A673 (cell line): ENCODE measurements at regions of chr1 and their contacts with region 1.

Region 1: DNA sequence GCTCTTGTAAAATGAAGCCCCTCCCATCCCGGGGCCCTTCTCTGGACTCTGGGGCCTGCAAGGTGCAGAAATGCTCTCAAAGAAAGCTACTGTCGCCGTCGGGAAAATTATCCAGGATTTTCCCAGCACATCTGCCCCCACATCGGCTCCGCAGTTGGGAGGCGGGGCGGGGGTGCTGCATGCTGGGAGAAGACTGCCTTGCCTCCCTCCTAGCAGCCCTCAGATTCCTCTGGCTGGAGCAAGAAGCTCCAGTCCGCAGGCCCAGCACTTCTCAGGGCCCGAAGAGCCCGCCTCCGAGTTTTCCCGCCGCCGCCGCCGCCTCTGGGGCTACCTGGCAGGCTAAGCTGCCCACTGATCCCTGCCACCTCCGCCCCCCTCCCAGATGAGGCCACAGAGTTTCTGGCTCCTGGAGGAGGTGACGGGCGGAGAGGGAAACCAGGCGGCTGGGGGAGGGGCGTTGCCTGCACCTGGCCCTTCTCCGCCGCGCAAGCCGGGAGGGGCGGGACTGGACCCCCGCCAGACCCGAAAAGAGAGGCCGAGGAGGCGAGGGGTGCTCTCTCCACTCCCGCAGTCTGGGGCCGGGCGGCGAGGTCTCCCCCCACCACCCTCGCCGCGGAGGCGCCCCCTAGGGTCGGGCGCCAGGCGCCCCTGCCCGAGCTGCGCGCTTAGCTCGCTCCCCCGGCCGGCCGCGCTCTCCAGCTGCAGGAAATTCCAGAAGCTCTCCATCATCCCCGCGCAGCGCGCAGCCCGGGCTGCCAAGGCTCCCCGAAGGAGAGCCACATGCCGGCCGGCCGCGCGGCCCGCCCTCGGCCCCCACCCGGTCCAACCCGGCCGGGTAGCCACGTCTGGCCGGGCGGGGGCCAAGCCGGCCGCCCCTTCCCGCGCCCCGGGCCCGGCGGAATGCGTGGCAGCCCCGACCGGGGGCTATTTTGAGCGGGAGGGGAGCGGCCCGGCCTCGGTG is 28.8 kb downstream of the AHDC1 start:
- DNase-seq: peak; percentile 75
- H3K4me3 ChIP-seq: peak overlapping the region; percentile 38
- H3K27ac ChIP-seq: no peak overlapping the region
- H3K4me1 ChIP-seq: peaks cover 59% of the 10 kb centered on the region
- H3K27me3 ChIP-seq: no peaks in the 10 kb centered on the region
- CTCF ChIP-seq: peak; percentile 54

Region 2: GRCh38 chr1:27087371-27088220 is 487.6 kb before region 1 on chr1:
- CTCF ChIA-PET with region 1: interaction called, 11 read pairs
- POLR2A ChIA-PET with region 1: no interaction called
- intact Hi-C with region 1: no loop called
- DNase-seq: no peak
- H3K4me3 ChIP-seq: no peak overlapping the region
- H3K27ac ChIP-seq: no peak overlapping the region
- H3K4me1 ChIP-seq: no peaks in the 10 kb centered on the region
- H3K27me3 ChIP-seq: no peaks in the 10 kb centered on the region
- CTCF ChIP-seq: no peak

Region 3: DNA sequence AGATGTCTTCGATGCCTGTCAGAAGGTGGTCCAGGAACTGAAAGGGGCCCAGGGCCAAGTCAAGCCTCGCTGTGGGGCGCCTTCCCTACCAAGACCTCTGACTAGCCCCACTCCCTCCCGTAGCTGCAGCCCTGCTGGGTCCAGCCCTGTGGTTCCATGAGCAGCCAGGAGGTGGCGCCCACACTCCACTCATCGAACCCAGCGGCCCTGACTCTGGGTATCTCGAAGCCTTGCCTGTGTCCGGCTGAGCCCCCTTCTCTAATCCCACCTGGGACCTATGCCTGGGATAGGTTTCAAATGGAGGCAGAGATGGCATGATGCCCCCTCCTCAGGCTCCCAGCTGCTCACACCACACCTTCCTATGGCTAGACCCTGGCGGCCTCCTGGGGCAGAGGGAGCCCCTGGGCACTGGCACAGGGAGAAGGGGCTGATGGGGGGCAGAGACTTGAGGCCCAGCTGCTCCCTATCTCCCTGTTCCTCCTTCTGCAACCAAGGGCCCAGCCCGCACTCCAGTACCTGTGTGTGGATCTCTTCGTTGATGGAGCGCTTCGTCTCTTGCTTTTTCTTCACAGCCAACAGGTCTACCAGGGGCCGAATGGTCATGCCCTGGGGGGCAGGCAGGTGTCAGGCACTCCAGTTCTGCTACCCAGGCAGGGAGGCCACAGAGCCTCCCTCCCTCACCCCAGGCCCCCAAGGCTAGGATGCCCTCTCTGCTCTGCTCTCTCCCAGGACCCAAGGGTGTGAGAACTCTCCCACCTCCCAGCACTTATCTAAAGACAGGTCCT is 472.3 kb before region 1 on chr1:
- CTCF ChIA-PET with region 1: interaction called, 10 read pairs
- POLR2A ChIA-PET with region 1: no interaction called
- intact Hi-C with region 1: no loop called
- DNase-seq: peak; percentile 74
- H3K4me3 ChIP-seq: no peak overlapping the region
- H3K27ac ChIP-seq: no peak overlapping the region
- H3K4me1 ChIP-seq: peaks cover 16% of the 10 kb centered on the region
- H3K27me3 ChIP-seq: no peaks in the 10 kb centered on the region
- CTCF ChIP-seq: peak; percentile 96

Region 4: GRCh38 chr1:27306892-27307761 is 268.0 kb before region 1 on chr1:
- CTCF ChIA-PET with region 1: interaction called, 10 read pairs
- POLR2A ChIA-PET with region 1: no interaction called
- intact Hi-C with region 1: no loop called
- DNase-seq: no peak
- H3K4me3 ChIP-seq: no peak overlapping the region
- H3K27ac ChIP-seq: no peak overlapping the region
- H3K4me1 ChIP-seq: no peaks in the 10 kb centered on the region
- H3K27me3 ChIP-seq: no peaks in the 10 kb centered on the region
- CTCF ChIP-seq: no peak

Region 5: GRCh38 chr1:27496604-27497155 is 78.5 kb before region 1 on chr1:
- CTCF ChIA-PET with region 1: interaction called, 12 read pairs
- POLR2A ChIA-PET with region 1: no interaction called
- intact Hi-C with region 1: no loop called
- DNase-seq: peak; percentile 52
- H3K4me3 ChIP-seq: peak overlapping the region; percentile 11
- H3K27ac ChIP-seq: no peak overlapping the region
- H3K4me1 ChIP-seq: peaks cover 4% of the 10 kb centered on the region
- H3K27me3 ChIP-seq: no peaks in the 10 kb centered on the region
- CTCF ChIP-seq: no peak

Region 6: GRCh38 chr1:27634177-27634984 is 59.2 kb after region 1 on chr1:
- CTCF ChIA-PET with region 1: no interaction called
- POLR2A ChIA-PET with region 1: no interaction called
- intact Hi-C with region 1: no loop called
- DNase-seq: no peak
- H3K4me3 ChIP-seq: peak overlapping the region; percentile 38
- H3K27ac ChIP-seq: no peak overlapping the region
- H3K4me1 ChIP-seq: no peaks in the 10 kb centered on the region
- H3K27me3 ChIP-seq: no peaks in the 10 kb centered on the region
- CTCF ChIP-seq: no peak

Region 7: DNA sequence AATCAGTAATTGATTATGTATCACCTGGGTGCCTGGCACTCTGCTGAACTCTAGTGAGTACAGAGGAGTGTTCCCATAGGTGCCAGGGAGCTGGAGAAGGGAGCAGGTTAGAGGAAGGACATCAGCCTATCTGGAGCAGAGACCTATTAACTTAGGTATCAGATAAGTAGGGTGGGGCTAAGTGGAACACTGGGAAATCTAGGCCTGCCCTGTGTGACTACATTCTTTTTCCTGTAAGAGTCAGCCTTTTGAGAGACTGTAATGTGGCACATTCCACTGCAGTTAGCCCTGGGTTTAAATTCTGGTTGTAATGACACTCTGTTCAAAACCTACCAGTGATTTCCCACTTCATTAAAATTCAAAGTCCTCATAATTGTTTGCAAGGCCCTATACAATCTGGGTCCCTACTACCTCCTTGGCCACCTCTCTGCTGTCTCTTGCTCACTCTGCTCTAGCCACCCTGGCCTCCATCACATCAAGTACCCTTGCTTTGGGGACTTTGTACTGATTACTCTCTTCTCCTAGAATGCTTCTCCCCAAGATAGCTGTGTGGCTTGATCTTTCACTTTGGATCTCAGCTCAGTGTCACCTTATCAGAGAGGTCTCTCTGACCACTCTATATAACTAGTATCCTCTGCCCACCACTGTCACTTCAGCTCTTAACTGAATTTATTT is 210.8 kb after region 1 on chr1:
- CTCF ChIA-PET with region 1: no interaction called
- POLR2A ChIA-PET with region 1: no interaction called
- intact Hi-C with region 1: no loop called
- DNase-seq: no peak
- H3K4me3 ChIP-seq: no peak overlapping the region
- H3K27ac ChIP-seq: no peak overlapping the region
- H3K4me1 ChIP-seq: no peaks in the 10 kb centered on the region
- H3K27me3 ChIP-seq: no peaks in the 10 kb centered on the region
- CTCF ChIP-seq: no peak

Region 8: DNA sequence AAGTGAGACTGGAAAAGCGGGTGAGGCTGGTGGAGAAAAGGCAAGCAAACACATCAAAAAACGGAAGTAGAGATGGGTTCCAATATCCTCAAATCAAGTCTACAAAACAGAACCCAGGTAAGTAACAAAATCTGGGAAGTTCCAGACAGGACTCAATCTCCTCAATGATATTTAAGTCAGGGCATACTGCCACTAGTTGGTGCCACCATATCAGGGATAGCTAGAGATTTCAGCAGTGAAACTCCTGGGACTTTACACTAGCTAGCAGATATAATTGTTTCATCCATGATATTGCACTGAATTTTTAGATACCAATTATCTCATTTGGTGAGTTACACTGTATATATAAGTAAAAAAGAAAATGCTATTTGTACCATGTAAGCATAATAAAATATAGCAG is 461.3 kb after region 1 on chr1:
- CTCF ChIA-PET with region 1: no interaction called
- POLR2A ChIA-PET with region 1: no interaction called
- intact Hi-C with region 1: no loop called
- DNase-seq: no peak
- H3K4me3 ChIP-seq: no peak overlapping the region
- H3K27ac ChIP-seq: no peak overlapping the region
- H3K4me1 ChIP-seq: no peaks in the 10 kb centered on the region
- H3K27me3 ChIP-seq: no peaks in the 10 kb centered on the region
- CTCF ChIP-seq: peak; percentile 28; the same call in 1 of the 2 replicates